ENCODE measurements at regions of chr12 and their contacts with region 1.

Region 1: DNA sequence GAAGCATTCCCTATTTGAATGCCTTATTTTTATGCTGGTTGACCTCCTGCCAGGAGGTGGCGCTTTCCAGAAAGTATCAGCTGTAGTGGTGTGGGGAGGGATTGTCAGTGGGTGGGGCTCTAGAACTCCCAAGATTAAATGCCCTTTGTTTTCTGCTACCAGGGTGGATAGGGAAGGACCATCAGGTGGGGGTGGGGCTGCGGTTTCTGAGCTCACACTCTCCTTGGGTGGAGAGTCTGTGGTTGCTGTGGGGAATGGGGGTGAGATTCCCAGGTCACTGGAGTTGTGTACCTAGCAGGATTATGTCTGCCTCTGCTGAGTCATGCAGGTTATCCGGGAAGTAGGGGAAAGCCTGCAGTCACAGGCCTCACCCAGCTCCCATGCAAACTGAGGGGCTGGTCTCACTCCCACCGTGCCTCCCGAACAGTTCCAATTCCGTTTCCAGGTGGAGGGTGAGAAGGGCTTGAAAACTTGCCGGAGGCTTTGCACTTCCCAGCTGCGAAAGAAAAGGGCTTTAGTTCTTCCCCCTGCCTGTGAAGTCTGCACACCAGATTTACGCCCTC is 68.3 kb downstream of the ALG10B start:
- DNase-seq: no peak
- ATAC-seq: peak; percentile 45
- H3K4me3 ChIP-seq: peak overlapping the region in 1 of 2 experiments; percentile 29; a peak in 2 of 4 replicates
- H3K27ac ChIP-seq: no peak overlapping the region
- H3K4me1 ChIP-seq: no peaks in the 10 kb centered on the region
- H3K27me3 ChIP-seq: no peaks in the 10 kb centered on the region
- CTCF ChIP-seq: peak; percentile 49

Region 2: GRCh38 chr12:38399711-38400206 is 14.9 kb after region 1 on chr12:
- CTCF ChIA-PET with region 1: no interaction called
- POLR2A ChIA-PET with region 1: no interaction called
- in situ Hi-C with region 1: no loop called
- intact Hi-C with region 1: no loop called
- DNase-seq: no peak
- ATAC-seq: no peak
- H3K4me3 ChIP-seq: no peak overlapping the region
- H3K27ac ChIP-seq: no peak overlapping the region
- H3K4me1 ChIP-seq: no peaks in the 10 kb centered on the region
- H3K27me3 ChIP-seq: no peaks in the 10 kb centered on the region
- CTCF ChIP-seq: no peak

Region 3: DNA sequence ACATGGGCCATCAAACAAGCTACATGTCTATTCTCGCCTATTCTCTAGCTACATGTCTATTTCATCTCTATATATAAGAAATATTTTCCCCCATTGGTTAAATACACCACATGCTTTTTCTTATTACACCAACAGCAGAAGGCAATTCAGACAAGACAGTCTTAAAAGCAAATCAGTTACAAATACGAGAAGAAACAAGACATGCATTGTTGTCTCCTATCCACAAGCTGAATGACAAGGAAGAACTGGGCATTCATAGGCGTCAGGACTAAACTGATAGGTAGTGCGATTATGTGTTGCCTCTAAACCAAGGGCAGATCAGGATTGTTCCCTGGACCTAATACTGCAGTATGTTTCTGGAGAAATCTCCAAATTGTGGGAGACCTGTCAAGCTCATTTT is 1701.6 kb after region 1 on chr12:
- CTCF ChIA-PET with region 1: interaction called, 10 read pairs
- POLR2A ChIA-PET with region 1: no interaction called
- in situ Hi-C with region 1: no loop called
- intact Hi-C with region 1: no loop called
- DNase-seq: no peak
- ATAC-seq: no peak
- H3K4me3 ChIP-seq: no peak overlapping the region
- H3K27ac ChIP-seq: no peak overlapping the region
- H3K4me1 ChIP-seq: no peaks in the 10 kb centered on the region
- H3K27me3 ChIP-seq: no peaks in the 10 kb centered on the region
- CTCF ChIP-seq: no peak

Measured in Panc1 (cell line).